H1 (cell line): ENCODE measurements at regions of chr11 and their contacts with region 1.

Region 1: GRCh38 chr11:363948-364761 is 5.1 kb upstream of the B4GALNT4 start:
- DNase-seq: peak; percentile 51 to 89
- H3K4me3 ChIP-seq: no peak overlapping the region
- H3K27ac ChIP-seq: no peak overlapping the region
- H3K4me1 ChIP-seq: peaks cover 0 to 10% (median 5%) of the 10 kb centered on the region in 4 experiments; a peak in 5 of 7 replicates
- H3K27me3 ChIP-seq: peaks cover 0 to 5% (median 2%) of the 10 kb centered on the region in 4 experiments; a peak in 1 of 7 replicates
- CTCF ChIP-seq: peak in 2 of 3 experiments; percentile 86 to 93; a peak in 3 of 4 replicates
- EP300 ChIP-seq: no peak
- POLR2A ChIP-seq: no peak; a peak in 1 of 3 replicates
- RAD21 ChIP-seq: peak; percentile 57 to 70

Region 2: DNA sequence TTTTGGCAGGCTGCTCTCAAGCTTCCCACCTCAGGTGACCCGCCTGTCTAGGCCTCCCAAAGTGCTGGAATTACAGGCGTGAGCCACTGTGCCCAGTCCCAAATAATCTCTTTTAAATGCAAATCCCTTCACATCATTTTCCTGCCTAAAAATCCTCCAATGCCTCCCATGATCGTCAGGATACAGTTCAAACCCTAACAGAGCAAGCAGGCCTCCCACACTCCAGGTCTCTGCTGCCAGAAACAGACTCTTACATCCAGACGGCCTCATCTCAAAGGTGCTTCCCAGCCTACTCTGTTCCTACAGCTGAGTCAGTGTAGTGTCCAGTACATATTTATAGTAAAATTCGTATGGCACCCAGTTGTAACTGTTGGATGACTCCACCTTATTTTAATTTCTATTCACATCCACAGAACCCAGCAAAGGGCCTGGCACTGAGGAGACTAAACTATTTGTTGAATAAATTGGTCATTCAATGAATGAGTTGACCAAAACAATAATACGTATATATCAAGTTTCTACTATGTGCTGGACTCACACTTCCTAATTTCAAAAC is 136.3 kb before region 1 on chr11:
- CTCF ChIA-PET with region 1: interaction called, 16 read pairs
- POLR2A ChIA-PET with region 1: no interaction called
- DNase-seq: no peak
- H3K4me3 ChIP-seq: no peak overlapping the region
- H3K27ac ChIP-seq: no peak overlapping the region
- H3K4me1 ChIP-seq: no peaks in the 10 kb centered on the region
- H3K27me3 ChIP-seq: no peaks in the 10 kb centered on the region
- CTCF ChIP-seq: no peak
- EP300 ChIP-seq: no peak
- POLR2A ChIP-seq: no peak
- RAD21 ChIP-seq: no peak

Region 3: GRCh38 chr11:269146-269890 is 94.8 kb before region 1 on chr11:
- CTCF ChIA-PET with region 1: interaction called, 11 read pairs
- POLR2A ChIA-PET with region 1: interaction called, 6 read pairs
- DNase-seq: no peak
- H3K4me3 ChIP-seq: peak overlapping the region in 1 of 4 experiments; percentile 1; a peak in 1 of 8 replicates
- H3K27ac ChIP-seq: no peak overlapping the region; the same call in 1 of the 2 replicates
- H3K4me1 ChIP-seq: peaks cover 4 to 20% (median 13%) of the 10 kb centered on the region in 4 experiments
- H3K27me3 ChIP-seq: no peaks in the 10 kb centered on the region
- CTCF ChIP-seq: no peak
- EP300 ChIP-seq: no peak
- POLR2A ChIP-seq: no peak
- RAD21 ChIP-seq: no peak

Region 4: DNA sequence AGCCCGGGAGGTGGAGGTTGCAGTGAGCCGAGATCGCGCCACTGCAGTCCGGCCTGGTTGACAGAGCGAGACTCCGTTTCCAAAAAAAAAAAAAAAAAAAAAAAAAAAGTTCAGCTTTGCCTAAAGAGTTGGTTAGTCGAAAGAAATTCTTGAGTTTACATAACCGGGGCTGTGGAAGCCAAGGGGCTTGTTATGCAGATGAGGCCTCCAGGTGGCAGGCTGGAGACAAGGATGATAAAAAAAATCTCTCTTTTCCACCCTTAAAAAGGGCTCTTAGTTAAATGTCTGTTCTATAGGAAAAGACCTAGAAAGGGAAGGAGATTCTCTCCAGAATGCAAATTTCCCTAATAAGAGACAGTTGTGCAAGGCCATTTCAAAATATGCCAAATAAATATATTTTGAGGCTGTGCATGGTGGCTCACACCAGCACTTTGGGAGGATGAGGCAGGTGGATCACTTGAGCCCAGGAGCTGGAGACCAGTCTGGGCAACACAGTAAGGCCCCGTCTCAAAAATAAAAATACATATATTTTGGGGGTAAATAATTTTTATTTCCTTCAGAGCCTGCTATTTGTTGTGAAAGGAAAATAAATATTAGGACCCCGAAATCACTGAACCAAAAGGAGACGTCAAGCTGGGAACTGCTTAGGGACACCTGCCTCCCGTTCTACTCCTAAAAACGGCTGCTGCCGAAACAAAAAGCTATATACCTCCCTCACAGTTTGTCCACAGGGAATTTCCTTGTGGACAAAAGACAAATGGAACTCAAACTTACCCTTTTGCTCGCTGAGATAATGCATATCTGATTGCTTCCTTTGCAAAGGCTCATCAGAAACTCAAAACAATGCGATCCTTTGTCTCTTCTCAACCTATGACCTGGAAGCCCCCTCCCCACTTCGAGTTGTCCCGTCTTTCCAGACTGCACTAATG is 59.0 kb before region 1 on chr11:
- CTCF ChIA-PET with region 1: interaction called, 37 read pairs
- POLR2A ChIA-PET with region 1: interaction called, 6 read pairs
- DNase-seq: no peak
- H3K4me3 ChIP-seq: peak overlapping the region in 2 of 4 experiments; percentile 3 to 42; a peak in 2 of 8 replicates
- H3K27ac ChIP-seq: peak overlapping the region; percentile 31; the same call in 1 of the 2 replicates
- H3K4me1 ChIP-seq: peaks cover 17 to 46% (median 33%) of the 10 kb centered on the region in 4 experiments
- H3K27me3 ChIP-seq: no peaks in the 10 kb centered on the region; a peak in 1 of 7 replicates
- CTCF ChIP-seq: peak; percentile 19 to 44 (median 31); a peak in 3 of 4 replicates
- EP300 ChIP-seq: no peak
- POLR2A ChIP-seq: no peak
- RAD21 ChIP-seq: peak; percentile 34 to 39

Region 5: GRCh38 chr11:382081-382629 is 18.0 kb after region 1 on chr11:
- CTCF ChIA-PET with region 1: interaction called, 11 read pairs
- POLR2A ChIA-PET with region 1: interaction called, 16 read pairs
- DNase-seq: no peak
- H3K4me3 ChIP-seq: no peak overlapping the region
- H3K27ac ChIP-seq: no peak overlapping the region
- H3K4me1 ChIP-seq: no peaks in the 10 kb centered on the region
- H3K27me3 ChIP-seq: no peaks in the 10 kb centered on the region
- CTCF ChIP-seq: no peak
- EP300 ChIP-seq: no peak
- POLR2A ChIP-seq: no peak
- RAD21 ChIP-seq: no peak

Region 6: DNA sequence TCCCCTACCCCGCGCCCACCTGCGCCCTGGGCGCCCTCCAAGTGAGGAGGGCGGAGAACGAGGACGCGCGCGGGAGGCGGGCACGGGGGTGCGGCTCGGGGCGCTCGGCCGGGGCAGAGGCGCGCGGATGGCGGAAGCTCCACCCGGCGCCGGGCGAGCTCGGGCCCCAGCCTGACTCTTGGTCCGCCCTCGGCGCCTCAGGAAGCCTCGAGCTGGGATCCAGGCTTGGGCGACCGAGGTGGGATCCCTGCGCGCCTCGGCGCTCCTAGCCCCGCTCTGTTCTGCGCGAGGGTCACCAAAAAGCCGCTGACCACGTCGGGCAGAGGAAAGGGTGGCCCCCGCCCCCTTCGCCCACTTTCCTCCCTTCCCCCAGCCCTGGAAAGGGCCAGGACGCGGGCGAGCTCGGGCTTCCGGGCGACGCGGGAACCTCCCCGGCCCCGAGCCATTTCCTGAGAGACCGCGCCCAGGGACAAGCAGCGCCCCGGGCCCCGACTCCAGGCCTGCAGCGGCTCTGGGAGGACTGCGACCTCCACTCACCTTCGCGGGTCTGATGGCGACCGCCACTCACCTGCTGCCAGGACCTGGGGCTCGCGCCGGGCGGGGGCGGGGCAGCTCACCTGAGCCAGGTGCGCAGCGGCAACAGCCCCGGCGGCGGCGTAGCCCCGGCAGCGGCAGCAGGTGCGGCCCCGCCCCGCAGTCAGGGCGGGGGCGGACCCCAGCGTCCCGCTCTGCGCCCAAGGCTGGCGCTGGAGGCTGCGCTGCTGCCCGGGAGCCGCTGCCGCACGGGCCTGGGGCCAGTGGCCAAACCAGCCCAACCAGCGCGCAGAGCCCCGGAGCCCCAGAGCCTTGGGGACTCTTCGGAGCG is 52.8 kb after region 1 on chr11:
- CTCF ChIA-PET with region 1: interaction called, 11 read pairs
- POLR2A ChIA-PET with region 1: interaction called, 7 read pairs
- DNase-seq: peak; percentile 50 to 90
- H3K4me3 ChIP-seq: peak overlapping the region; percentile 54 to 92 (median 62)
- H3K27ac ChIP-seq: peak overlapping the region; percentile 42; the same call in 1 of the 2 replicates
- H3K4me1 ChIP-seq: peaks cover 0 to 26% (median 16%) of the 10 kb centered on the region in 4 experiments; a peak in 6 of 7 replicates
- H3K27me3 ChIP-seq: peaks cover 0 to 13% (median 4%) of the 10 kb centered on the region in 4 experiments; a peak in 5 of 7 replicates
- CTCF ChIP-seq: no peak
- EP300 ChIP-seq: no peak
- POLR2A ChIP-seq: no peak; a peak in 2 of 3 replicates
- RAD21 ChIP-seq: peak in 1 of 2 experiments; percentile 3; a peak in 1 of 4 replicates

Region 7: GRCh38 chr11:518463-519250 is 154.5 kb after region 1 on chr11:
- CTCF ChIA-PET with region 1: interaction called, 13 read pairs
- POLR2A ChIA-PET with region 1: interaction called, 4 read pairs
- DNase-seq: peak; percentile 51 to 93
- H3K4me3 ChIP-seq: peak overlapping the region in 1 of 4 experiments; percentile 45; a peak in 2 of 8 replicates
- H3K27ac ChIP-seq: no peak overlapping the region
- H3K4me1 ChIP-seq: no peaks in the 10 kb centered on the region
- H3K27me3 ChIP-seq: 0 out of 7 replicates have a peak, but pooled peaks cover 0 to 3% (median 0%) of the 10 kb centered on the region in 4 experiments
- CTCF ChIP-seq: peak; percentile 82 to 100 (median 94)
- EP300 ChIP-seq: 0 out of 3 replicates have a peak, but pooled peaks of 1 of the 2 experiments have one; percentile 69
- POLR2A ChIP-seq: no peak
- RAD21 ChIP-seq: peak; percentile 67 to 91

Region 8: DNA sequence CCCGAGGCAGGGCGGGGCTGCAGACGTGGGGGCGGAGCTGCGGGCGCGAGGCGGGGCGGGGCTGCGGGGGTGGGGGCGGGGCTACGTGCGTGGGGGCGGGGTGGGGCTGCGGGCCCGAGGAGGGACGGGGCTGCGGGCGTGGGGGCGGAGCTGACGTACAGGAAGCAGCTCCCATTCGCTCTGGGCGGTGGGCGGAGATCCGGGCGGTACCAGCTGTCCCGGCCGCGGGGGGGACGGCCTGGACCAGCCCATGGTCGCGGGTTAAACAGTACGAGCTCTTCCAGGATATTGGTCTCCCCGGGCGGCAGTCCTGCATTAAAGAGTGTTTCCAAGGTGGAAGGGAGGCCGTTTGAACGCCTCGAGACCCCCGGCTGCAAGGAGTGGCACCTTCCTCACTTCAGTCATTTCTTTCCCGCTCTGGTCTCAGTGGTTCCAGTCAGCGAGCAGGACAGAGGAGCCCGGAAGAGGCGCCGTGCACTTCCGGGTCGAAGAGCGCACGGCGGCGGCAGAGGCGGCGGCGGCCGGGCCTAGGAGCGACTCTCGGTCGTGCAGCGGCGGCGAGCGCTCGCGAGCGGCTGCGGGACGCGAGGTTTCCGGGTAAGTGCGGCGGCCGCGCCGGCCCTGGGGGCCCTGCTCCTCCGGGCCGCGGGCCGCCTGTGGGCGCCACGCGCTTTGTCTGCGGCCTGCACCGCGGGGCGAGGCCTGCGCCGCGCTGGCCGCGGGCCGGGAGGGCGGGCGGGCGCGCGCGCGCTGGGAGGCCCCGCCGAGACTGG is 212.0 kb after region 1 on chr11 and contains the start of gene PHRF1:
- CTCF ChIA-PET with region 1: no interaction called
- POLR2A ChIA-PET with region 1: no interaction called
- DNase-seq: peak; percentile 75 to 96
- H3K4me3 ChIP-seq: peak within 1 kb of the TSS; percentile 87 to 99 (median 88)
- H3K27ac ChIP-seq: peak within 1 kb of the TSS; percentile 100
- H3K4me1 ChIP-seq: peaks cover 6 to 25% (median 15%) of the 10 kb centered on the region in 4 experiments
- H3K27me3 ChIP-seq: peaks cover 8 to 17% (median 13%) of the 10 kb centered on the region in 4 experiments
- CTCF ChIP-seq: no peak
- EP300 ChIP-seq: peak in 1 of 2 experiments; percentile 99; a peak in 2 of 3 replicates
- POLR2A ChIP-seq: peak in 1 of 2 experiments; percentile 92; a peak in 2 of 3 replicates
- RAD21 ChIP-seq: no peak; a peak in 1 of 4 replicates
- total RNA-seq, gene PHRF1: 37.3 and 39.8 TPM in 2 replicates

Region 9: DNA sequence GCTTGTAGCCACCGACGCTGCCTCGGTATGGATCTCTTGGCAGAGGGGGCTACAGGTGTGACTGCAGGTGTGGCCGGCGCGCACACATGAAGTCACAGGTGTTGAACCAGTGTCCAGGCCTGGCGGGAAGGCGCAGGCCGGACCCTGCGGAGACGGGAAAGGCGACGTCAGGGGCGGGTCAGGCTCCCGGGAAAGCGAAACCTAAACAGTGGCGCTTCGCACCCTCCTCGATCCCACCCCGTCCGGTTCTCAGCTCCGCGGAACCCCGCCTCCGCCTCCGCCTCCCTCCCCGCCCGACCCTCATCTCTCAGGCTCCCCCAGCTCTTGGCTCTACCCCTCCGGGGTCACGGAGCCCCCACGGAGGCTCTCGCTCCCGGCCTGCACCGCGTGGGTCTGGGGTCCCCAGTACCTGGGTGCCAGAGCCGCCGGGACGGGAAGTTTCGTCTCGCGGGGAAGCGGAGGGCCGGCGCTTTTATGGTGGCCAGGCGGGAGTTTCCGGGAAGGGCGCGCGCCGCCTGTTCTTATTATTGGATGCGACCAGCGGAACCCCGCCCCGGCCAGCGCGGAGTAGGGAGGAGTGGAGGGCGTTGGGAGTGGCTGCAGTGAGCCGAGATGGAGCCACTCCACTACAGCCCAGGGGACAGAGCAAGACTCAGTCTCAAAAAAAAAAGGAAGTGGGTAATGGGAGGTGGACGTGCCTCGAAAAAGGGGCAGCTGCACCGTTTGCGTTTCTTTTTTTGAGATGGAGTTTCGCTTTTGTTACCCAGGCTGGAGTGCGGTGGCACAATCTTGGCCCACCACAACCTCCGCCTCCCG is 251.6 kb after region 1 on chr11 and contains the start of gene IRF7:
- CTCF ChIA-PET with region 1: no interaction called
- POLR2A ChIA-PET with region 1: no interaction called
- DNase-seq: peak in 1 of 2 experiments; percentile 92
- H3K4me3 ChIP-seq: peak within 1 kb of the TSS; percentile 49 to 80 (median 58)
- H3K27ac ChIP-seq: peak within 1 kb of the TSS; percentile 82; the same call in 1 of the 2 replicates
- H3K4me1 ChIP-seq: peaks cover 0 to 15% (median 3%) of the 10 kb centered on the region in 4 experiments; a peak in 5 of 7 replicates
- H3K27me3 ChIP-seq: no peaks in the 10 kb centered on the region
- CTCF ChIP-seq: no peak
- EP300 ChIP-seq: peak in 1 of 2 experiments; percentile 19; a peak in 1 of 3 replicates
- POLR2A ChIP-seq: peak in 1 of 2 experiments; percentile 67; a peak in 2 of 3 replicates
- RAD21 ChIP-seq: no peak
- total RNA-seq, gene IRF7: 9.4 and 9.6 TPM in 2 replicates

Region 10: DNA sequence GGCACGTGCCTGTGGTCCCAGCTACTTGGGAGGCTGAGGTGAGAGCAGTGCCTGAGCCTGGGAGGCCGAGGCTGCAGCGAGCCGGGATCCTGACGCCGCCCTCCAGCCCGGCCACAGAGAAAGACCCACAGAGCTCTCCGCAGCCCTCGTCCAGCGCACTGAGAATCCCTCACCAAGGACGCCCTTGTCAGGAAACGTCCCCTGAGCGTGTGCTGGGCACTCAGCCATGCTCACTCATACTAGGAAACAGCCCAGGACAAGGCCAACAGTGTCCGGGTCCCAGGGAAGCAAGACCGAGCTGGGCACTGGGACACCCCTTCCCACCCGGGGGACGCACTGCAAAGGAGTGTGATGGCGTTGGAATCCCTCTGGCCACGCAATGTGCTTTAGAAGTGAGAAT is 316.3 kb after region 1 on chr11:
- CTCF ChIA-PET with region 1: no interaction called
- POLR2A ChIA-PET with region 1: no interaction called
- DNase-seq: no peak
- H3K4me3 ChIP-seq: no peak overlapping the region
- H3K27ac ChIP-seq: no peak overlapping the region
- H3K4me1 ChIP-seq: peaks cover 0 to 2% (median 0%) of the 10 kb centered on the region in 4 experiments; a peak in 3 of 7 replicates
- H3K27me3 ChIP-seq: no peaks in the 10 kb centered on the region
- CTCF ChIP-seq: no peak
- EP300 ChIP-seq: no peak
- POLR2A ChIP-seq: no peak
- RAD21 ChIP-seq: no peak